ENCODE measurements at regions of chr3 and their contacts with region 1.

Region 1: DNA sequence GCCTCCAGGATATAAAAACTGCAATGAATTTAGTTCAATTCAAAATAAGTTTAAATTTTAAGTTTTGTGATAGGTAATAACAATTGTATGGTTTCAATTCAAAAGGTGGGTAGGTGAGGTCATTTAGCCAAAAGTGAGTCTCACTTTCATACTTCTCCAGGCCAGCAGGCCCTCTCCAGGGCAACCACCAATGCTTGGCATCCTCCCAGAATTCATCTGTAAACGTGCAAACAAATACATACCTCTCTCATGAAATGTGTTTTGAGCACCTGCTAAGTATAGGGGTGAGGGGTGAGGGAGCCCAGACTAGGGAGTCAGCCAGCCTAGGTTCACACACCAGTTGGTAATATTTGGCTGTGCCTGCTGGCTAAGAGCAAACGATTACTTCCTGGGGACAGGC is 22.0 kb upstream of the RBSN start:
- DNase-seq: no peak
- H3K4me3 ChIP-seq: no peak overlapping the region
- CTCF ChIP-seq: no peak

Region 2: GRCh38 chr3:15086263-15086662 is 34.7 kb before region 1 on chr3:
- CTCF ChIA-PET with region 1: no interaction called
- POLR2A ChIA-PET with region 1: no interaction called
- DNase-seq: no peak
- H3K4me3 ChIP-seq: no peak overlapping the region
- CTCF ChIP-seq: no peak

Region 3: GRCh38 chr3:15108082-15108545 is 12.9 kb before region 1 on chr3:
- CTCF ChIA-PET with region 1: interaction called, 121 read pairs
- POLR2A ChIA-PET with region 1: no interaction called
- DNase-seq: no peak
- H3K4me3 ChIP-seq: no peak overlapping the region
- CTCF ChIP-seq: peak; percentile 86

Region 4: GRCh38 chr3:15319575-15319974 is 198.6 kb after region 1 on chr3:
- CTCF ChIA-PET with region 1: no interaction called
- POLR2A ChIA-PET with region 1: no interaction called
- DNase-seq: no peak
- H3K4me3 ChIP-seq: no peak overlapping the region
- CTCF ChIP-seq: no peak

Measured in AG04449 (cell line).